AG04450 (cell line): ENCODE measurements at regions of chr19 and their contacts with region 1.

Region 1: GRCh38 chr19:13162518-13163314 is 12.5 kb downstream of the IER2 start:
- DNase-seq: peak; percentile 91
- H3K4me3 ChIP-seq: peak overlapping the region; percentile 49
- H3K27ac ChIP-seq: peak overlapping the region; percentile 97
- H3K27me3 ChIP-seq: no peaks in the 10 kb centered on the region
- CTCF ChIP-seq: no peak

Region 2: DNA sequence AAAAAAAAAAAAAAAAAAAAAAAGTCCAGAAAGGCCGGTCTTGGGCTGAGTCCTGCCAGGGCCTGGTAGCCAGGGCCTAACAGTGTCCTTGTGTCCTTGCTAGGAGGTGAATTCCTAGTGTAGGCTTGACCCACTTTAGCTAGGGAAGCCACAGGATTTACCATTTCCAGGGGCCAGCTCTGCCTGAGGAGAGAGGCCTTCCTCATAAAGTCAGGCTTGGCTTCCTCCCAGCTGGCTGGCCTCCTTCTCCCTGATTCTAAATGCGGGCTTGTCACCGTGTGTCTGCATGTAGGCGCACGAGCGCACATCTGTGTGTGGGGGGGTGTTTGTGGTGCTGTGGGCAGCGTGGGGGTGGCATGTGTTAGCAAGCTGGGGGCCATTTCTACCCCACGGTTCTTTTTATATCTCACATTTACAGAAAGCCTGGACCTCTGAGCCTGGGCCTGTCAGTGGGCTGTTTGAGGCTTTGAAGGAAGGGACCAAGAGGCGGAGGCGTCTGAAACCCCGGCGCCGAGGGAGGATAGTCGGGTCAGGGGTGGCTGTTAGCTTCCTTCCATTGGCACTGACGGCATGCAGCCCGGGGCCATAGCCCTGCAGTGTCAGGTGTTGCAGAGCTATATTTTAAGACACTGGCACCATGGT is 19.2 kb after region 1 on chr19:
- CTCF ChIA-PET with region 1: no interaction called
- POLR2A ChIA-PET with region 1: interaction called, 11 read pairs
- DNase-seq: no peak
- H3K4me3 ChIP-seq: no peak overlapping the region
- H3K27ac ChIP-seq: peak overlapping the region; percentile 47
- H3K27me3 ChIP-seq: no peaks in the 10 kb centered on the region
- CTCF ChIP-seq: no peak